Heart left ventricle (tissue), 16 donors: ENCODE measurements at regions of chr2 and their contacts with region 1.

Region 1: GRCh38 chr2:196361606-196362326 is 190.4 kb upstream of the STK17B start:
- DNase-seq: peak in 3 of 5 donors; percentile 33 to 44 (median 33)
- ATAC-seq: peak; percentile 22 to 78 (median 76)
- H3K4me3 ChIP-seq: peak overlapping the region; percentile 6 to 58 (median 48)
- H3K27ac ChIP-seq: peak overlapping the region; percentile 19 to 76 (median 54)
- H3K4me1 ChIP-seq: peaks cover 0 to 34% (median 11%) of the 10 kb centered on the region in 12 donors
- H3K27me3 ChIP-seq: no peaks in the 10 kb centered on the region
- CTCF ChIP-seq: no peak
- POLR2A ChIP-seq: peak in 1 of 2 donors; percentile 28

Region 2: GRCh38 chr2:196399722-196400691 is 38.2 kb after region 1 on chr2:
- intact Hi-C with region 1: loop called in 1 of 10 experiments (anchors 5 kb)
- DNase-seq: peak in 1 of 5 donors; percentile 39
- ATAC-seq: peak; percentile 77 to 91 (median 87)
- H3K4me3 ChIP-seq: peak overlapping the region in 2 of 12 donors; percentile 7 to 22
- H3K27ac ChIP-seq: peak overlapping the region; percentile 10 to 78 (median 68)
- H3K4me1 ChIP-seq: peaks cover 5 to 48% (median 33%) of the 10 kb centered on the region in 12 donors
- H3K27me3 ChIP-seq: no peaks in the 10 kb centered on the region
- CTCF ChIP-seq: no peak
- POLR2A ChIP-seq: no peak